CD14-positive monocyte (primary cell): ENCODE measurements at regions of chr2 and their contacts with region 1.

Region 1: DNA sequence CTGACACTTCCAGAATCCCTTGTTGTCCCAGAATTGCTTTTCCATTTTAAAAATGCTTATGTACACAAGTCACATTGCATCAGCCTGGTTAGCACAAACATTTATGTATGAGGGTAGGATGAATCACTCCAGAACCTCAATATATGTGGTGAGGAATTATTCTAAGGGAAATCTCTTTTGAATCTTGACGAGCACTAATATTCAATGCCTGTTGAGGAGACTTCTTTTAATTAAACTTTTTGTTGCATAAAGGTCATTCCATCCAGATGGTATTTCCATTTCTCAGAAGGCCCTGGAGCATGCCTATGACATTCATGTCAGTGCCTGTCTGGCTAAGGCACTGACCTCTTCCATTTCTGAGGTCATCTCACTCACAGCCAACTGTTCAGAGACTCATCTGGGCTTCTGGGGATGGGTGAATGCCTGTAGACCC is 28.1 kb downstream of the ACMSD start:
- DNase-seq: no peak
- H3K4me3 ChIP-seq: no peak overlapping the region
- H3K4me3 Mint-ChIP-seq: no peak overlapping the region
- H3K27ac ChIP-seq: no peak overlapping the region
- H3K27ac Mint-ChIP-seq: no peak overlapping the region
- H3K4me1 ChIP-seq: no peaks in the 10 kb centered on the region
- H3K4me1 Mint-ChIP-seq: no peaks in the 10 kb centered on the region
- H3K27me3 ChIP-seq: no peaks in the 10 kb centered on the region
- H3K27me3 Mint-ChIP-seq: peaks cover 0 to 3% (median 0%) of the 10 kb centered on the region in 3 donors
- CTCF ChIP-seq: no peak

Region 2: DNA sequence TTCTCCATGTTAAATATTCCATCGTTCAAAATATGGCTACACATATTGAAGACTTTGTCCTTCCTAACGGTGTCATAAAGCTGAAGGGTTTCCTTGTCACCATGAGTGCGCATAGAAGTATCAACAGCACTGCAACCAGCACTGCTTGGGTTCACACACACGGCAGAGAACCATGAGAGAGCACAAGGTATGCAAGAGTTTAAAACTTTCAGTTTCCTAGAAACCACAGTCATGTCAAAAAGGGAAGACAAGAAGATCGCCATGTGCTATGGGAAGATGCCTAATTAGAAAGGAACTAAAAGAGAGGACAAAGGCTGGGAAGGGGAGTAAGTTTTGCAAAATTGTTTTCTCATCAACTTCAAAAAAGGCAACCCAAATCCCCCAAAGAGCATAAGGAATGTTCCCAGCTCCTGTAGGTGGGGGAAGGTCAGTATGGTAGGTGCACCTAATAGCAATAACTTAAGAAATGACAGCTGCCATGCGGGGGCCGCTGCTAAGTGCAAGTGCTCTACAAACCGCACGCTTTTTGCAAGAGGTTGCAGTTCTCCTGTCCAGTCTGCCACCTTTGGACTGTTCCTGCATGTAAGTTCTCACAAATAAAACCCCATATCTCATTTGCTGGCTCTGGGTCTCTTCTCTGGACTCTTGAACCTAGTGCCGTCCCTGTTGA is 284.6 kb before region 1 on chr2:
- intact Hi-C with region 1: loop called in 1 of 2 experiments (anchors 10 kb)
- DNase-seq: peak in 1 of 3 donors; percentile 7
- H3K4me3 ChIP-seq: no peak overlapping the region
- H3K4me3 Mint-ChIP-seq: no peak overlapping the region
- H3K27ac ChIP-seq: no peak overlapping the region
- H3K27ac Mint-ChIP-seq: peak overlapping the region in 1 of 7 donors; percentile 47
- H3K4me1 ChIP-seq: peaks cover 0 to 5% of the 10 kb centered on the region in 2 donors
- H3K4me1 Mint-ChIP-seq: peaks cover 14% of the 10 kb centered on the region
- H3K27me3 ChIP-seq: no peaks in the 10 kb centered on the region
- H3K27me3 Mint-ChIP-seq: peaks cover 0 to 3% (median 0%) of the 10 kb centered on the region in 3 donors
- CTCF ChIP-seq: no peak